ENCODE measurements at regions of chr2 and their contacts with region 1.

Region 1: DNA sequence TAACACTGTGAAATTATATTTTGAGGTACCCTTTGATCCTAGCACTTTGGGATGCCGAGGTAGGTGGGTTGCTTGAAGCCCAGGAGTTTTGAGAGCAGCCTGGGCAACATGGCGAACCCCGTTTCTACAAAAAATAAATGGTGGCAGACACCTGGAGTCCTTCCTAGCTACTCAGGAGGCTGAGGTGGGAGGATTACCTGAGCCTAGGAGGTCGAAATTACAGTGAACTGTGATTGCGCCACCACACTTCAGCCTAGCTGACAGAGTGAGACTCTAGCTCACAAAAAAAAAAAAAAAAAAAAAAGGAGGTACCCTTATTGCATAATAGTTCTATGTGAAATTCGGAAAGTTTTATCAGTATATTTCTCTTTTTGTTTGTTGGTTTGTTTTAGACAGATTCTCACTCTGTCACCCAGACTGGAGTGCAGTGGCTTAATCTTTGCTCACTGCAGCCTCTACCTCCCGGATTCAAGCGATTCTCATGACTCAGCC is 59.2 kb upstream of the SCYGR2 start:
- DNase-seq: no peak
- ATAC-seq: no peak
- H3K4me3 Mint-ChIP-seq: no peak overlapping the region
- H3K27ac Mint-ChIP-seq: no peak overlapping the region
- H3K4me1 Mint-ChIP-seq: peaks cover 8% of the 10 kb centered on the region
- H3K27me3 Mint-ChIP-seq: no peaks in the 10 kb centered on the region

Region 2: DNA sequence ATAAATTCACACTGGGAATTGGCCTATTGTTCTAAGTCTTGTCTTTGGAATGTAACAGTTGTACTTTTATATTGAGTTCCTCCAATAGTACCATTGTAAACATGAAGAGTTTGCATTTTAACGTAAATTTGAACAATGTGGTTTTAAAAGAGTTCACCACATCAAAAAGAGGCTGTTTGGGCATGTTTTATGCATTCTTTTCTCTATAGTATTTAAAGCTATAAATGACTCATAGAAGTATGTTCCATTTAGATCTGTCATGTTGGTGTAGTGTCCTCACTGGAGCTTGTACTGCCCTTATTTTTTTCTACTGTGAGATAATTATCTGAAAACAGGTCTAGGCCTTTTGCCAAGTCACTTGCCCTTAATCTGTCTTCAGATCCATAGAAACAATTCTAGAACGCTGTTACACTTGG is 561.7 kb before region 1 on chr2:
- CTCF ChIA-PET with region 1: no interaction called
- POLR2A ChIA-PET with region 1: no interaction called
- intact Hi-C with region 1: no loop called
- DNase-seq: no peak
- ATAC-seq: peak; percentile 44
- H3K4me3 Mint-ChIP-seq: no peak overlapping the region
- H3K27ac Mint-ChIP-seq: no peak overlapping the region
- H3K4me1 Mint-ChIP-seq: peaks cover 18% of the 10 kb centered on the region
- H3K27me3 Mint-ChIP-seq: no peaks in the 10 kb centered on the region

Region 3: DNA sequence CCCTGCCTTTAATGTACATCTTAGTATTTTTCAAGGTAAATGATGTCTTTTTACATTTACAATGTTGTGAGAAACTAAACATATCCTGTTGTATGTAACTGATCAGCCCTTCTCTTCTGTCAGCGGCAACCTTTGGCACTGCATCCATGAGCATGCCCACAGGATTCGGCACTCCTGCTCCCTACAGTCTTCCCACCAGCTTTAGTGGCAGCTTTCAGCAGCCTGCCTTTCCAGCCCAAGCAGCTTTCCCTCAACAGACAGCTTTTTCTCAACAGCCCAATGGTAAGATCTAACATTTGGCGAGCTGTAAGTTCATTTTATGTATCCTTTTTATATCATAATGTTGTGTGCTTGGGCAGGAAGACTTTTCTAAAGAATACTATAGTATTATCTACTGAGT is 12.3 kb after region 1 on chr2:
- CTCF ChIA-PET with region 1: no interaction called
- POLR2A ChIA-PET with region 1: no interaction called
- intact Hi-C with region 1: loop called in 1 of 2 experiments (anchors 2 kb)
- DNase-seq: no peak
- ATAC-seq: no peak
- H3K4me3 Mint-ChIP-seq: no peak overlapping the region
- H3K27ac Mint-ChIP-seq: no peak overlapping the region
- H3K4me1 Mint-ChIP-seq: no peaks in the 10 kb centered on the region
- H3K27me3 Mint-ChIP-seq: no peaks in the 10 kb centered on the region

Region 4: DNA sequence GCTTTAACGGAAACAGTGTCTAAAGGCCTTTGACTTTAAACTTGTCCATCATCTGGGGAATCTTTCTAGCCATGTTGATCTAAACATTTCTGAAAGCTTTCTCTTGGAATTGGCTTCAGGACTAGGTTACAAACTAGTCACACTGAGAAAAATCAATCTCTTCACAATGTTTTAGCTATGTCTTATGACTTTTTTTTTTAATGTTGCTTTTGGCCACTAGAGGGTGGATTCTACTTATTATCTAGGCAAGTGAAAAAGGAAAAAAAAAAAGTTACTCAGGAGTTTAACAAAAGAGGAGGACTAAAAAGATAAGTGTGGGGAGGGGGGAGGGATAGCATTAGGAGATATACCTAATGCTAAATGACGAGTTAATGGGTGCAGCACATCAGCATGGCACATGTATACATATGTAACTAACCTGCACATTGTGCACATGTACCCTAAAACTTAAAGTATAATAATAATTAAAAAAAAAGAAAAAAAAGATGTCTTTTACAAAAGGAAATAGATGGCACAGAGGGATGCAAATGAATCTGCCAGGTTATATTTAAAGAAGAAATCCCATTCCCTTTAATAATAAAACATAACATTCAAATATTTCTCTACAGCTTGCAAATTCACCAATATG is 1891.9 kb after region 1 on chr2:
- CTCF ChIA-PET with region 1: no interaction called
- POLR2A ChIA-PET with region 1: no interaction called
- intact Hi-C with region 1: no loop called
- DNase-seq: no peak
- ATAC-seq: no peak
- H3K4me3 Mint-ChIP-seq: no peak overlapping the region
- H3K27ac Mint-ChIP-seq: no peak overlapping the region
- H3K4me1 Mint-ChIP-seq: no peaks in the 10 kb centered on the region
- H3K27me3 Mint-ChIP-seq: peaks cover 6% of the 10 kb centered on the region